Stomach (tissue), 19 donors: ENCODE measurements at regions of chr16 and their contacts with region 1.

Region 1: DNA sequence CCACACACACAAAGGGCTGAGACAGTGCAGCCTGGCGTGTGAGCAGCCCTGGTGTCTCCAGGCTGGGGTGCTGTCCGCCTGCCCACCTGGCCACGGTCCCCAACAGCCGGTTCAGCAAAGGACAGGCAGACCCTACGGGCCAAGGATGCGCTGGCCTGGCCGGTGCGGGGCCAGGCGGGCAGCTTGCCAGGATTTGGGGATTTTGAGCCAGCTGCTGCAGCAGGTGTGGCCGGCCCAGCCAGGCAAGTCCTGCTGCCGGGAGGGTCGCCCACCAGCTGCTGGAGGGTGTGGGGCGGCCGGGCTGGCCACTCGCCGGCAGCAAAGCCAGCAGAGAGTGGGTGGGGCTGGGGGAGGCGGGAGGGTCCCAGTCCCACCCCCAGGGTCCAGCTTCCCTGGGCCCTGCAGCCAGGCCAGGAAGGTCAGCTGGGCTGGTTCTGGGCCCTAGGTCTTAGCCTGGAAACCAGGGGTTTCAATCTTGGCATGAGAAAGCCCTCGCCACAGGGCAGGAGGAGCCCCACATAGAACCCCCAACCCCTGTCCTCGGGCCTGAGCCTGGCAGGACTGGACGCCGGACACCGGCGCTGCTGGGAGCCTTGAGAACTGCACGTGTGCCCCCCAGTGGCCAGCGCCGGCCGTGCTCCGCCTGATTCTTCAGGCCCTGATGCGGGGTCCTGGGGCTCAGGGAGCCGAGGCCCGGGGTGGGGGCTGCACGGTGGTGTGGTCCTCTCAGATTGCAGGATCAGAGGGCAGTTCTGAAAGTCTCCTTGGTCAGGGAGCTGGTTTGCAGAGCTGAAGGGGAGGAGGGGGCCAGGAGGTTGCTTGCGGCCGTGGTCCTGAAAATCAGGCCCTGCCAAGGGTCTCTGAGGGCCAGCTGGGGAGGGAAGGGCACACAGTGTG is 17.6 kb upstream of the SSTR5 start:
- DNase-seq: peak; percentile 68 to 84
- H3K4me3 ChIP-seq: no peak overlapping the region
- H3K27ac ChIP-seq: no peak overlapping the region
- H3K4me1 ChIP-seq: peaks cover 0 to 11% (median 6%) of the 10 kb centered on the region in 4 donors
- H3K27me3 ChIP-seq: peaks cover 6 to 94% (median 52%) of the 10 kb centered on the region in 3 donors
- CTCF ChIP-seq: peak in 5 of 7 experiments; percentile 48 to 80 (median 75)
- EP300 ChIP-seq: no peak
- POLR2A ChIP-seq: no peak

Region 2: GRCh38 chr16:714558-715476 is 340.1 kb before region 1 on chr16 and contains the start of gene METRN:
- intact Hi-C with region 1: loop called (anchors 5 kb)
- DNase-seq: peak; percentile 94 to 97
- H3K4me3 ChIP-seq: peak within 1 kb of the TSS; percentile 61 to 94 (median 68)
- H3K27ac ChIP-seq: peak within 1 kb of the TSS in 3 of 5 donors; percentile 17 to 69 (median 43)
- H3K4me1 ChIP-seq: peaks cover 24 to 59% (median 51%) of the 10 kb centered on the region in 4 donors
- H3K27me3 ChIP-seq: peaks cover 9 to 72% (median 23%) of the 10 kb centered on the region in 3 donors
- CTCF ChIP-seq: no peak
- EP300 ChIP-seq: no peak
- POLR2A ChIP-seq: no peak
- total RNA-seq, gene METRN: 7.1 to 79.7 (median 20.4) TPM

Region 3: DNA sequence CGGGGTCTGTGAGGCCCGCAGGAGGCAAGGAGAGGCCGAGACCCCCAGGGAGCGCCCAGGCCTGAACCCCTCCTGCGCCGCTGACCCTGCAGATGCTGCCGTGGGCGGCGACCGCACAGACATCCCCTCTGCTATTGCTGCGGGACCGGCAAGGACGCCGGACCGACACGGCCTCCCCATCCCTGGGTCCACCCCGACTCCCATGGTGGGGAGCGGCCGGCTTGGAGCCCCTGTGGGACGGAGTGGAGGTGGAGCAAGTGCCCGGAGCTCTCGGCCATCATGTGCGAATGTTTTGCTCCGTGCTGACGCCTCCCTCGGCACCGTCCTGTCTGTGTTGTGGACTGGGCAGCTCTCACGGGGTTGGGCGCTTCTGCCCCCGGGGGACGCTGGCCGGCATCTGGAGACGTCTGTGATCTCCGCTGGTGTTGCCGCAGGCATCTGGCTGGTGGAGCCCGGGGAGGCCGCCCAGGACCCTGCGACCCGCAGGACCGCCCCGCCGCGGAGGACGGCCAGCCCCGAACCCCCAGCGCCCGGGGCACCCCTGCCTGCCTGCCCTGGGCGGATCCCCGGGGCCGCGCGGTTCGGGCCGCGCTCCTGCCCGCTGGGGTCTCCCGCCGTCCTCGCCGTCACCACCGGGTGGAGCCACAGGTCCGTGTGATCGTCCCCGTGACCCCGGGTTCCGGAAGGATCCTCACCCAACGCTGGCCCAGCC is 241.5 kb before region 1 on chr16:
- intact Hi-C with region 1: loop called (anchors 5 kb)
- DNase-seq: peak in 1 of 2 donors; percentile 75
- H3K4me3 ChIP-seq: no peak overlapping the region
- H3K27ac ChIP-seq: no peak overlapping the region
- H3K4me1 ChIP-seq: peaks cover 6 to 27% (median 11%) of the 10 kb centered on the region in 4 donors
- H3K27me3 ChIP-seq: peaks cover 10 to 98% (median 54%) of the 10 kb centered on the region in 3 donors
- CTCF ChIP-seq: peak in 1 of 7 experiments; percentile 38
- EP300 ChIP-seq: no peak
- POLR2A ChIP-seq: no peak

Region 4: DNA sequence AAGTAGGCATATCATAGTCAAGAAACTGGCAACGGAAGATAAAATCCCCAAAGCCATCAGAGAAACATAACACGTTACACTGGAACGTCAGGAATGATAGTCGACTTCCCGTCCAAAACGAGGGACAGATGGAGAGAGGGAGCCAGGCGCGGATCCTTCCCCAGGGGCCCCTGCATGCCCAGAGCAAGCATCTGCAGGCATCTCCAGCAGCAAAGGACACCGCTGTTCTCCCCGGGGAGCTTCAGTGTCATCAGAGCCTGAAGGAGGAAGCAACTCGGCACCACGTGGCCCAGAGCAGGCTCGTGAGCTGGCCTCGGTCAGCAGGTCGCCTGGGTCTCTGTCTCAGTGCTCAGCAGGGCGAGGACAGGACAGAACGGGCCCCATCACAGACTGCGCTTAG is 134.2 kb before region 1 on chr16:
- intact Hi-C with region 1: no loop called
- DNase-seq: peak in 1 of 2 donors; percentile 51
- H3K4me3 ChIP-seq: no peak overlapping the region
- H3K27ac ChIP-seq: peak overlapping the region in 2 of 5 donors; percentile 26 to 29
- H3K4me1 ChIP-seq: peaks cover 0 to 7% (median 0%) of the 10 kb centered on the region in 4 donors
- H3K27me3 ChIP-seq: no peaks in the 10 kb centered on the region
- CTCF ChIP-seq: no peak
- EP300 ChIP-seq: no peak
- POLR2A ChIP-seq: no peak

Region 5: GRCh38 chr16:988471-989353 is 66.2 kb before region 1 on chr16:
- intact Hi-C with region 1: no loop called
- DNase-seq: no peak
- H3K4me3 ChIP-seq: no peak overlapping the region
- H3K27ac ChIP-seq: no peak overlapping the region
- H3K4me1 ChIP-seq: no peaks in the 10 kb centered on the region
- H3K27me3 ChIP-seq: peaks cover 0 to 80% (median 9%) of the 10 kb centered on the region in 3 donors
- CTCF ChIP-seq: no peak
- EP300 ChIP-seq: no peak
- POLR2A ChIP-seq: no peak